CD8-positive, alpha-beta T cell (primary cell): ENCODE measurements at regions of chr2 and their contacts with region 1.

Region 1: DNA sequence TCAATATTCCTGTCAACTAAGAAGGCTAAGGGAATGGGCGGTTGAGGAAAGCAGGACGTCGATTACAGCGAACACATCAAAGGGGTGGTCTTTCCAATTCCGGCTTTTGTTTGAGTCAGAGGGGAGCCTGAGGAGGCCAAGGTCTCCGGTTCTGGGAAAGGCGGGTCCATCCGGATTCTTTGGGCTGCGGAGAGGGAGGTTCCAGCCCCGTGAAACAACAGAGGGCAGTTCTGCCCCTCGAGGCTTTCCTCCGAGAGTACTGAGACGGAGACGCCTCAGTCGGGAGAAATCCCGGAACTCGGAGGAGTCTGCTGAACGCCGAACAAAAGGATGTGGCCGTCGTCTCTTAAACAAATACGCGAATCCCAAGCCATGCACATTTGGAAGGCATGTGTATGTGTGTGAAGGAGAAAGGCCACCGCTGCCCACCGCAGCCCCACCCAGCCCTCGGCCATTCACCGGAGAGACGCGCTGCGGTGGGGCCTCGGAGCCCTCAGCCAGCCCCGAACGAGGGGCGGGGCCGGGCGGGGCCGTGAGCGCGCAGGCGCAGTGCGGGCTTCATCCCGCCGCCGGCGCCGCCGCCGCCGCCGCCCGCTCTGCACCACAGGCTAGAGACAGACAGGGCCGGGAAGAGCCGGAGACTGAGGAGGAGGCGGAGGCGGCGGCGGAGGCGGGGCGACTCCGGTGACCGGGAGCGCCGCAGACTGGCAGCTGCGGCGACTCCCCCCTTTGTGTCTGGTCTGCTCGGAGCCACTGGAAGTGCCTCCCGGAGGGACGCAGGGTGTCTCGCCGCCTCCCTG is at the start of gene BMPR2:
- DNase-seq: peak; percentile 63 to 90 (median 81)
- ATAC-seq: peak; percentile 77
- H3K4me3 ChIP-seq: peak within 1 kb of the TSS; percentile 61 to 100
- H3K4me3 Mint-ChIP-seq: peak within 1 kb of the TSS; percentile 99
- H3K27ac ChIP-seq: peak within 1 kb of the TSS; percentile 64 to 80
- H3K27ac Mint-ChIP-seq: peak within 1 kb of the TSS; percentile 93
- H3K4me1 ChIP-seq: peaks cover 23% of the 10 kb centered on the region
- H3K4me1 Mint-ChIP-seq: peaks cover 30% of the 10 kb centered on the region
- H3K27me3 ChIP-seq: no peaks in the 10 kb centered on the region
- H3K27me3 Mint-ChIP-seq: no peaks in the 10 kb centered on the region
- CTCF ChIP-seq: no peak
- total RNA-seq, gene BMPR2: 9.4 to 9.6 TPM

Region 2: DNA sequence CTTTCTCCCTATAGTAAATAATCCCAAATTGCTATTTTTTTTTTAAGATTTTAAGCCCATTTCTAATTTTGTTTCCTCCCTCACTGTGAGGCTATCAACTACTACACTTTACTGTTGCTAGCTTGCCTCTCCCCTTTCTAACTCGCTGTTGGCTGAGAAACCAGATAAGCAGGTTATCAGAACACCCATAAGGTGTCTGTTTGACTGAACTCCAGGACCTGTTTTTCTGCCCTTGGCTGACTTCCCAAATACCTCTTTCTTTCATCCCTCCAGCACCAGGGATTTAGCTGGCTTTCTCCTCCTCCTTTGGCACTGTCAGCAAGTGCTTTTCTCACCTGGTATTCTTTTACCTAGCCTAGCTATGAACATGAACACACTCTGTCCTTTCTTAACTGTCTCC is 935.6 kb before region 1 on chr2:
- CTCF ChIA-PET with region 1: no interaction called
- POLR2A ChIA-PET with region 1: no interaction called
- intact Hi-C with region 1: loop called in 1 of 2 experiments (anchors 10 kb)
- DNase-seq: no peak
- ATAC-seq: no peak
- H3K4me3 ChIP-seq: no peak overlapping the region
- H3K4me3 Mint-ChIP-seq: no peak overlapping the region
- H3K27ac ChIP-seq: no peak overlapping the region
- H3K27ac Mint-ChIP-seq: no peak overlapping the region
- H3K4me1 ChIP-seq: peaks cover 8% of the 10 kb centered on the region
- H3K4me1 Mint-ChIP-seq: peaks cover 46% of the 10 kb centered on the region
- H3K27me3 ChIP-seq: no peaks in the 10 kb centered on the region
- H3K27me3 Mint-ChIP-seq: no peaks in the 10 kb centered on the region
- CTCF ChIP-seq: no peak

Region 3: GRCh38 chr2:202238234-202239197 is 137.3 kb before region 1 on chr2 and contains the start of gene SUMO1:
- CTCF ChIA-PET with region 1: no interaction called
- POLR2A ChIA-PET with region 1: no interaction called
- intact Hi-C with region 1: loop called (anchors 1 to 2 kb)
- DNase-seq: peak; percentile 79 to 95 (median 92)
- ATAC-seq: peak; percentile 93
- H3K4me3 ChIP-seq: peak within 1 kb of the TSS; percentile 82 to 83
- H3K4me3 Mint-ChIP-seq: peak within 1 kb of the TSS; percentile 99
- H3K27ac ChIP-seq: peak within 1 kb of the TSS; percentile 82
- H3K27ac Mint-ChIP-seq: peak within 1 kb of the TSS; percentile 99
- H3K4me1 ChIP-seq: peaks cover 15% of the 10 kb centered on the region
- H3K4me1 Mint-ChIP-seq: peaks cover 43% of the 10 kb centered on the region
- H3K27me3 ChIP-seq: no peaks in the 10 kb centered on the region
- H3K27me3 Mint-ChIP-seq: no peaks in the 10 kb centered on the region
- CTCF ChIP-seq: no peak
- total RNA-seq, gene SUMO1: 86.1 to 87.4 TPM

Region 4: DNA sequence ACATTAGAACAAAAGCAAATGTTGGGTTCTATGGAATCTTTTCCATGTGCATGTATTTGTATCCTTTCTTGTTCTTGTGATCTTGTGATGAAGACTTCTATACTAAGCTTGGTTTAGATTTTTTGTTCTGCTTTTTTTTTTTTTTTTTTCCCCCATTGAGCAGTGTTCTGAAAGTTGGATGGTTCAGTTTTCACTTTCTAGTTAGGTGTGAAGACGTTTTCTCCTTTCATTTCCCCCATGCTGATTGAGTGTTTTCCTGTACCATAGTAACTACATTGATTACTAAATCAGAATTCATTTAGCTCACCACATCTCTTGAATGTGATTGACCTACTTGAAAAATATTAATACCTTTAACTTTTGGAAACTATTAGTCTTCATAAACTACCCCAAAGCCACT is 76.1 kb before region 1 on chr2:
- CTCF ChIA-PET with region 1: no interaction called
- POLR2A ChIA-PET with region 1: no interaction called
- intact Hi-C with region 1: loop called in 1 of 2 experiments (anchors 5 kb)
- DNase-seq: no peak
- ATAC-seq: no peak
- H3K4me3 ChIP-seq: no peak overlapping the region
- H3K4me3 Mint-ChIP-seq: no peak overlapping the region
- H3K27ac ChIP-seq: no peak overlapping the region
- H3K27ac Mint-ChIP-seq: no peak overlapping the region
- H3K4me1 ChIP-seq: no peaks in the 10 kb centered on the region
- H3K4me1 Mint-ChIP-seq: peaks cover 2% of the 10 kb centered on the region
- H3K27me3 ChIP-seq: no peaks in the 10 kb centered on the region
- H3K27me3 Mint-ChIP-seq: no peaks in the 10 kb centered on the region
- CTCF ChIP-seq: no peak

Region 5: DNA sequence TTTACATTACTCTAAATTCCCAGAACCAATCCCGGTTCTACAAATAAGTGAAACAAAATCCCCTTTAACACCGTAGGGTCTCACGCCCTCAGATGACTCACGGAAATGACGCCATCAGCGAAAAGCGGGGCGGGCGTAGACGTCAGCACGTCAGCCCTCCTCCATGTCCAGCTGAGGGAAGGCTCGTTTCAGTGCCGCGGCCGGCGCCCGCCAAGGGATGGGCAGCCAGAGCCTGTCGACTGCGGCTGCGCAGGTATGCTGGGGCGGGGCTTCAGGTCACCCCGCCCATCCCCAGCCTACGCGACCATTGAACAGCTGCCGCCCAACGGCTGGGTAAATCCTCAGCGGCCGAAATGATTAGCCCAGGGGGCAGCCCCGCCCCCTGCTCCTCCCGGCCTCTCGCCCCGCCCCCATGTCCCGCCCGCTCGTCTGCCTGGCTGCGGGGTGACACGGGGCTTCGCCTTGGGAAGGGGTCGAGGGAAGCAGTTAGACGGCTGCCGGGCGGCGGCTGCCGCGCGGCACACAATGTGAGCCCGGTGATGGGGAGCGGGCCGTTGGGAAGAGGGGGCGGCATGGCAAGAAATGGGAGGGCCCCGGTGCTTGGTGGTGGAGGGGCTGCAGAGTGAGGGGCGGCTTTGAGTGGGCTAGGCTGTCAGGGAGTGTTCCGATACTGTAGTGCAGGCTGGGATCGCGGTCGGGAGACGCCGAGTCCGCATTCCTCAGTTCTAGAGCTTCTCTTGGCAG is 638.8 kb after region 1 on chr2 and contains the start of gene NBEAL1:
- CTCF ChIA-PET with region 1: no interaction called
- POLR2A ChIA-PET with region 1: no interaction called
- intact Hi-C with region 1: loop called (anchors 10 kb)
- DNase-seq: peak; percentile 92 to 99 (median 95)
- ATAC-seq: peak; percentile 90
- H3K4me3 ChIP-seq: peak within 1 kb of the TSS; percentile 77 to 97
- H3K4me3 Mint-ChIP-seq: peak within 1 kb of the TSS; percentile 88
- H3K27ac ChIP-seq: peak within 1 kb of the TSS; percentile 86 to 89
- H3K27ac Mint-ChIP-seq: peak within 1 kb of the TSS; percentile 92
- H3K4me1 ChIP-seq: peaks cover 37% of the 10 kb centered on the region
- H3K4me1 Mint-ChIP-seq: peaks cover 46% of the 10 kb centered on the region
- H3K27me3 ChIP-seq: no peaks in the 10 kb centered on the region
- H3K27me3 Mint-ChIP-seq: no peaks in the 10 kb centered on the region
- CTCF ChIP-seq: no peak
- total RNA-seq, gene NBEAL1: 11.2 to 13.2 TPM